ENCODE measurements at regions of chr14 and their contacts with region 1.

Region 1: GRCh38 chr14:61837336-61838229 is 75.4 kb downstream of the SNAPC1 start:
- DNase-seq: peak; percentile 50 to 79 (median 63)
- ATAC-seq: peak; percentile 97
- H3K4me3 ChIP-seq: no peak overlapping the region
- H3K27ac ChIP-seq: no peak overlapping the region
- H3K4me1 ChIP-seq: no peaks in the 10 kb centered on the region
- H3K27me3 ChIP-seq: no peaks in the 10 kb centered on the region
- CTCF ChIP-seq: peak; percentile 78 to 87 (median 79)
- EP300 ChIP-seq: no peak
- POLR2A ChIP-seq: no peak
- RAD21 ChIP-seq: peak; percentile 83 to 91

Region 2: DNA sequence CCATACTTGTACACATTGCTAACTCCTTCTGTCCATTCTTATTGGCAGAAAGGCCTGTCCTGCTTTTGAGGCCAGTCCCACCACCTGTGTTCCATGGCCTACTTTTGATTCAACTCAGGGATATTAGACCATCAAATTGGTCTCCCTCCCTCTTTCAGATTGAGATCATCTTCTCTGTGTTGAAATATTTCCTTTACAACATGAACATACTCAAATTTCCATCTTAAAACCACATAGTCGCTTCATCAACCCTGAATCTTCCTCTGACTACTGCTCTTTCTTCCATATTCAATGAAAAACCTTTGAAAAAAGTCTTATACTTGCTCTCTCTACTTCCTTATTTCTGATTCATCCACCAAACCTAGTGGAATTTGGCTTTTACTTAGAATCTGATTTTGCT is 891.6 kb before region 1 on chr14:
- CTCF ChIA-PET with region 1: no interaction called
- POLR2A ChIA-PET with region 1: no interaction called
- in situ Hi-C with region 1: no loop called
- intact Hi-C with region 1: no loop called
- DNase-seq: no peak
- ATAC-seq: no peak
- H3K4me3 ChIP-seq: no peak overlapping the region
- H3K27ac ChIP-seq: no peak overlapping the region
- H3K4me1 ChIP-seq: no peaks in the 10 kb centered on the region
- H3K27me3 ChIP-seq: no peaks in the 10 kb centered on the region
- CTCF ChIP-seq: no peak
- EP300 ChIP-seq: no peak
- POLR2A ChIP-seq: no peak
- RAD21 ChIP-seq: no peak

Region 3: GRCh38 chr14:61296719-61297502 is 540.7 kb before region 1 on chr14:
- CTCF ChIA-PET with region 1: no interaction called
- POLR2A ChIA-PET with region 1: no interaction called
- in situ Hi-C with region 1: no loop called
- intact Hi-C with region 1: loop called (anchors 10 kb)
- DNase-seq: peak in 2 of 4 experiments; percentile 12 to 39
- ATAC-seq: peak; percentile 62; the same call in 2 of the 3 replicates
- H3K4me3 ChIP-seq: no peak overlapping the region
- H3K27ac ChIP-seq: no peak overlapping the region
- H3K4me1 ChIP-seq: no peaks in the 10 kb centered on the region
- H3K27me3 ChIP-seq: no peaks in the 10 kb centered on the region
- CTCF ChIP-seq: peak; percentile 30 to 58 (median 32); a peak in 3 of 6 replicates
- EP300 ChIP-seq: no peak
- POLR2A ChIP-seq: no peak
- RAD21 ChIP-seq: peak; percentile 23 to 73; a peak in 2 of 4 replicates

Region 4: DNA sequence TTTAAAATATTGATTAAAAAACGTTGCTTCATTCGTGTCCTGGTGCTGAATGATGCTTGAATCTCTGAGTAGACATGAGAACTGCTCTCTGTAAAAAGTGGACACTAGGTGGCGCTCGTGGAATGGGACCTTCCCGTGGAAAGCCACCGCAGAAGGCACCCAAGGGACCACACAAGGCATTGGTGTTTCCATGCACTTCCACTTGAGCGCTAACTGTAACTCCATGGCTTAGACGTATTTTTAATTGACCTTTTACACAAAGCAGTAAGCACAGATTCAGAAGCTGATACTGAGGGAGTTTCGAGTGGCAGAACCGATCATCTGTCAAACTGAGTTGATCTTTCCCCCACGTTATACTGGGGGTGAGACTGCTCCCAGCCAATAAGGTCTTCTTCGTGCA is 380.9 kb before region 1 on chr14:
- CTCF ChIA-PET with region 1: interaction called, 22 read pairs
- POLR2A ChIA-PET with region 1: no interaction called
- in situ Hi-C with region 1: loop called (anchors 5 kb)
- intact Hi-C with region 1: loop called (anchors 1 kb)
- DNase-seq: peak; percentile 68 to 76 (median 72)
- ATAC-seq: peak; percentile 93
- H3K4me3 ChIP-seq: no peak overlapping the region
- H3K27ac ChIP-seq: no peak overlapping the region
- H3K4me1 ChIP-seq: peaks cover 0 to 10% of the 10 kb centered on the region in 2 experiments; a peak in 4 of 5 replicates
- H3K27me3 ChIP-seq: no peaks in the 10 kb centered on the region
- CTCF ChIP-seq: peak; percentile 69 to 72 (median 71)
- EP300 ChIP-seq: no peak
- POLR2A ChIP-seq: no peak
- RAD21 ChIP-seq: peak; percentile 63 to 73

Region 5: DNA sequence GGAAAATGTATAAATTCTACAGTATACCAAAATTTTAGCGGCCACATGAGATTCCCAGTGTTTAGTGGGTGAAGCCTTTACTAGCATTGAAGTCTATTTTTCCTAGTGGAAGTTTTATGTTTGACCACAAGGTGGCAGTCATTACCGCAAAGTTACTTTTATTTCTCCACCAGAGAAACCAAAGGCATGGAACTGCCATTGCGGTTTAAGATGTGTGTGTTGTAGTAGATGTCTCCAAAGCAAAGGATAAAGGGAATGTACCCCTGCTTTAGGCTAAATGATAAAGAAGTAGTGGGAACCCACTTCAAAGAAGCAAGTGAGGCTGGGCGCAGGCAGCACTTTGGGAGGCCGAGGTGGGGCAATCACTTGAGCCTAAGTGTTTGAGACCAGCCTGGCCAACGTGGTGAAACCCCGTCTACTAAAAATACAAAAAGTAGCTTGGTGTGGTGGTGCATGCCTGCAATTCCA is 375.7 kb before region 1 on chr14:
- CTCF ChIA-PET with region 1: interaction called, 22 read pairs
- POLR2A ChIA-PET with region 1: no interaction called
- in situ Hi-C with region 1: loop called (anchors 5 kb)
- intact Hi-C with region 1: loop called (anchors 1 kb)
- DNase-seq: peak; percentile 43 to 60 (median 54)
- ATAC-seq: peak; percentile 86
- H3K4me3 ChIP-seq: no peak overlapping the region
- H3K27ac ChIP-seq: no peak overlapping the region
- H3K4me1 ChIP-seq: peaks cover 4 to 19% of the 10 kb centered on the region in 2 experiments; a peak in 4 of 5 replicates
- H3K27me3 ChIP-seq: no peaks in the 10 kb centered on the region; a peak in 1 of 5 replicates
- CTCF ChIP-seq: peak; percentile 47 to 65 (median 55); a peak in 5 of 6 replicates
- EP300 ChIP-seq: no peak
- POLR2A ChIP-seq: no peak
- RAD21 ChIP-seq: peak; percentile 78 to 81

Region 6: DNA sequence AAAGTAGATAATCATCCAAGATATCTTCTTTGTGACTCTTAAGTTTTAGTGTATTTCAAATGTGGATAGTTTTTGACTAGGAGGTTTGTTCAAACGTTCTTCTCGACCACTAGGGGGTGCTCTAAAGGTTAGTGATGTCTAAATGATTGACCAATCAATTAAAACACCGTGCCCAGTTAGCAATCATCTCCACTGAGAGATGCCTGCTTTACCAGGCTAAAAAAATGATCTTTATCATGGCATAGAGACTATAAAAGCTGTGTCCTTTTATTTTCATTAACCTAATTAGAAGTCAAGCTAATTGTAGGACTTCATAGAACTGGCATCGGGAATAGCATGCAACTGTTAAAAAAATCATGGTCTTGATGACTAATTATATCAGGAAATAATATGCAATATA is 362.3 kb before region 1 on chr14:
- CTCF ChIA-PET with region 1: no interaction called
- POLR2A ChIA-PET with region 1: no interaction called
- in situ Hi-C with region 1: no loop called
- intact Hi-C with region 1: loop called (anchors 1 kb)
- DNase-seq: peak; percentile 38 to 48 (median 45)
- ATAC-seq: peak; percentile 62; the same call in 2 of the 3 replicates
- H3K4me3 ChIP-seq: no peak overlapping the region
- H3K27ac ChIP-seq: no peak overlapping the region
- H3K4me1 ChIP-seq: peaks cover 0 to 3% of the 10 kb centered on the region in 2 experiments; a peak in 1 of 5 replicates
- H3K27me3 ChIP-seq: no peaks in the 10 kb centered on the region
- CTCF ChIP-seq: peak; percentile 9 to 59 (median 52); a peak in 5 of 6 replicates
- EP300 ChIP-seq: no peak
- POLR2A ChIP-seq: no peak
- RAD21 ChIP-seq: peak; percentile 28 to 72

Region 7: DNA sequence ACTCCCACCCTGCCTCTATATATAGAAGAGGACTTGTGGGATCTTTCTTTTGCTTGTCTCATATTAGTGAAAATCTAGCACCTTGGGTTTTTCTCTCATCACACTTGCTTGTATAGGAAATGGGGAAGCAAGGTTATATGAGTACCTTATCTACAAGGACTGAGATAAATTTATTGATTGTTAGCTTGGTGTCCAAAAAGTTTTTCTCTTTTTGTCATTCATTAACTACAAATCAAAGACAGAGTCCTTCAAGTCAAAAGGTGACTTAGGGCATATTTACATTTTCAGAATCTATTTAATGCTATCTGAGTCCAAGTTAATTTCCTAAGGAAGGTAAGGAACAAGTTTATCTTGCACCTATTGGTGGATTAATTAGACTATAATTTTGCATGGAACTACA is 17.3 kb after region 1 on chr14:
- CTCF ChIA-PET with region 1: no interaction called
- POLR2A ChIA-PET with region 1: no interaction called
- in situ Hi-C with region 1: no loop called
- intact Hi-C with region 1: no loop called
- DNase-seq: no peak
- ATAC-seq: no peak
- H3K4me3 ChIP-seq: no peak overlapping the region
- H3K27ac ChIP-seq: no peak overlapping the region
- H3K4me1 ChIP-seq: no peaks in the 10 kb centered on the region
- H3K27me3 ChIP-seq: no peaks in the 10 kb centered on the region
- CTCF ChIP-seq: no peak
- EP300 ChIP-seq: no peak
- POLR2A ChIP-seq: no peak
- RAD21 ChIP-seq: no peak

Measured in K562 (cell line).